ENCODE measurements at regions of chr3 and their contacts with region 1.

Region 1: GRCh38 chr3:30199096-30199759 is 407.2 kb upstream of the TGFBR2 start:
- H3K4me3 ChIP-seq: no peak overlapping the region
- H3K27ac ChIP-seq: no peak overlapping the region
- H3K4me1 ChIP-seq: no peaks in the 10 kb centered on the region
- CTCF ChIP-seq: peak; percentile 17; the same call in 1 of the 2 replicates

Region 2: DNA sequence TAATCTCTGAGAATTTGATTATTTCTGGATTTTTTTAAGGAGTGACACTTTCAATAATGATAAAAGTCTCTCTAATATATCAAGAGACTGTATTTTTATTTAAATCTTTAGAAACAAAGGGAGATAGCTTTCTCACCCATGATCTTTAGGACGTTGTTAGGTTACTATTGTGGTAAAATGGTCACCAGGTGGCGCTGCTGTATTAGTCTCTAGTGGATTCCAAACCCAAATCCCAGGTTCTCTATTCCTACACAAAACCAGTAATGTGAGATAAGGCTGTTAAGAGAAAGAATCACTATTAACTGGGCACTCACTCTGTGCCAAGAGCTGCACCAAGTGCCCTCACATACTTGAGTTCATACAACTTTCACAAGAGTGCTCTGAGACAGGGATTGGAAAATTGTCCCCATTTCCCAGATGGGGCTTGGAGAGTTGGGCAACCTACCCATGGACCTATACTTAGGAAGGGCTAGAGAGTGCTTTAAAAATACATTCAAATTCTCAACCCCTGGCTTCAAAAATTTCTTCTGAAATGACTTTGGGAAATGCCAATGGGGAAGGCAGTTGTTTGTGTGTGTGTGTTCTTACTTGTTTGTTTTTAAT is 186.2 kb before region 1 on chr3:
- CTCF ChIA-PET with region 1: interaction called, 22 read pairs
- POLR2A ChIA-PET with region 1: no interaction called
- H3K4me3 ChIP-seq: no peak overlapping the region
- H3K27ac ChIP-seq: no peak overlapping the region
- H3K4me1 ChIP-seq: no peaks in the 10 kb centered on the region
- CTCF ChIP-seq: no peak

Region 3: DNA sequence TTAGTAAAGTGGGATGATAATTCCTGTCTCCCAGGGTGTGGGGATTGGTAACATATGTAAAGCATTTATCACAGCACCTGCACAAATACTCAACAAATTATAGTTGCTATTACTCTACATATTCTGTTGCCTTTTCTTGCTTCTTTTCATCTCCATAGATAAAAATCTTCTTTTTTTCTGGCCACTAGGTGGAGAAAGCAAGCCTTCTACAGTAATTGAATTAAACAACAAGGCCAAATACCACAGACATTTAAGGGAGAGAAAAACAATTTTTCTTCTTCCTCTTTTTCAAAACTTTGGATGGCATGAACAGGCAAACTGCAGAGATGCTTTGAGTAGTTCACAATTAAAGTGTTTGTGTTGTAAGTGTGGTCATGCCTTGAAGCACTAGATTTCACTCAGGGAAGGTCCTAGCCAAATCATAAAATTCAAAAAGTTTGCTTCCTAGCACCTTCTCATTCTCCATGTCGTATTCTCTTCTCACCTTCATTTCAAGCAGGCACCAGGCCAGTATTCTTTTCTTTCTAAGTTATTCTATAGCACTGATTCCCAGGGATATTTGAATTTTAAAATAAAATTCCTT is 86.2 kb before region 1 on chr3:
- CTCF ChIA-PET with region 1: interaction called, 30 read pairs
- POLR2A ChIA-PET with region 1: no interaction called
- H3K4me3 ChIP-seq: no peak overlapping the region
- H3K27ac ChIP-seq: no peak overlapping the region
- H3K4me1 ChIP-seq: no peaks in the 10 kb centered on the region
- CTCF ChIP-seq: 0 out of 2 replicates have a peak, but pooled peaks have one; percentile 8

Region 4: DNA sequence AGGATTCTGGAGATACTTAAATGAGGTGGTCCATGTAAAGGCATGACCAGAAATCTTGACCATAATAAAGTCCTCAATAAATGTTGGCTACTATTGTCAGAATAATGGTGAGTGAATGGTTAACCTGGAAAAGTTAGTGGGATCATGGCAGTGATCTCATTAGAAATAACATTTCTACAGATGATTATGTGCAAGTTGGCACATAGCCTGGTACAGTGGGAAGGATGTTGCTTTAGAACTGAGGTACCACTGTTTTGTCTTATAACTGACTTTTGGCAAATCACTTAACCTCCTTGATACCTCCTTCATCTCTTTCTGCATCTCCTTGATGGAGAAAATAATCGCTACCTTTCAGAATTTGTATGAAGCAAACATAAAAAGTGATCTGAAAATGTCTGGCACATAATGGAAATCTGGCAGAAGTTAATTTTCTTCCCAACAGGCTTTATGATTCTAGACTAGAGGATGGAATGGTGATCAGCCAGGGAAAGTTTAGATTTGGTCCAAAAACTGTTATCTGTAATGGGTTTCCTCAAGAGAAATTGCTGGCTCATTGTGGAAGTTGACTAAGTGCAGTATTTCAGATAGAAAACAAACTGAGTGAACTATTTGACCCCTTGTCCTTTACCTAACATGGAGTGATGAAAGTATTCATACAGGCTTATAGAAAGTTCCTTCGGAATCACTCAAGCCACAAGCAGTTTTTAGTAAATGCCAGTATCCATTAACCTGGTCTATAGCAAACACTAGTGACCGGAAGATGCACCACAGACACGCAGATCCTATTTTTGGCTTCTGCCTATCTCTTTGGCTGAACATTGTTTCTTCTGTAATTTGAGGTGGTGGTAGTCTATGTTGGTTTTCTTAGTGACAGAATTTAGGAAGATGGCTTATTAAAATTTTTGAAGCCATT is 42.4 kb before region 1 on chr3:
- CTCF ChIA-PET with region 1: no interaction called
- POLR2A ChIA-PET with region 1: no interaction called
- H3K4me3 ChIP-seq: no peak overlapping the region
- H3K27ac ChIP-seq: no peak overlapping the region
- H3K4me1 ChIP-seq: no peaks in the 10 kb centered on the region
- CTCF ChIP-seq: no peak

Region 5: DNA sequence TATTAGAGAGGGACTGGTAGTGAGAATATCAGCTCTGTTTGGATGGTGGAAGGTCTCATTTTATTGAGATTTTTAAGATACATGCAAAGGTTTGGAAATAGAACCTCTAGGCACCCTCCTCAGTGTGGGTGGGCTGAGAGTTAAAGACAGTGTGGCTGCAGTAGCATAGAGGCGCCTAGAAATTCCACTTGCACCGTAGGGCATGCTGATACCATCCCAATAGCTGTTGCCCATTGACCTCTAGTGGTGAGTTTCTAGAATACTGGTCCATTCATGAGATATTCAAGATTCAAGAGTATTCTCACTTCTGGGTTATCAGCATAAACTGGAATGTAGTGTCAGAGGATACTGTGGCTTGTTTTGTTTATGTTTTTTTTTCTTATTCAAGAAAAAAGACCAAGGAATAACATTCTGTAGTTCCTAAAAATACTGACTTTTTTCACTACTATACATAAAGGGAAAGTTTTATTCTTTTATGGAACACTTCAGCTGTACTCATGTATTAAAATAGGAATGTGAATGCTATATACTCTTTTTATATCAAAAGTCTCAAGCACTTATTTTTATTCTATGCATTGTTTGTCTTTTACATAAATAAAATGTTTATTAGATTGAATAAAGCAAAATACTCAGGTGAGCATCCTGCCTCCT is 494.4 kb after region 1 on chr3:
- CTCF ChIA-PET with region 1: interaction called, 28 read pairs
- POLR2A ChIA-PET with region 1: no interaction called
- H3K4me3 ChIP-seq: no peak overlapping the region
- H3K27ac ChIP-seq: no peak overlapping the region
- H3K4me1 ChIP-seq: peaks cover 4% of the 10 kb centered on the region; the same call in 1 of the 2 replicates
- CTCF ChIP-seq: peak; percentile 39; the same call in 1 of the 2 replicates

Measured in HEK293 (cell line).